ENCODE measurements at regions of chr3 and their contacts with region 1.

Region 1: GRCh38 chr3:126746395-126747177 is 42.5 kb downstream of the CHCHD6 start:
- DNase-seq: no peak
- ATAC-seq: no peak
- H3K4me3 ChIP-seq: no peak overlapping the region
- H3K4me1 ChIP-seq: peaks cover 4% of the 10 kb centered on the region
- CTCF ChIP-seq: no peak

Region 2: GRCh38 chr3:126798521-126798920 is 51.9 kb after region 1 on chr3:
- intact Hi-C with region 1: no loop called
- DNase-seq: no peak
- ATAC-seq: no peak
- H3K4me3 ChIP-seq: no peak overlapping the region
- H3K4me1 ChIP-seq: no peaks in the 10 kb centered on the region
- CTCF ChIP-seq: no peak

Region 3: GRCh38 chr3:126961191-126961790 is 214.7 kb after region 1 on chr3:
- intact Hi-C with region 1: no loop called
- DNase-seq: peak; percentile 48 to 74 (median 62)
- ATAC-seq: peak; percentile 72
- H3K4me3 ChIP-seq: no peak overlapping the region
- H3K4me1 ChIP-seq: no peaks in the 10 kb centered on the region
- CTCF ChIP-seq: no peak

Region 4: GRCh38 chr3:127544192-127544802 is 797.7 kb after region 1 on chr3:
- intact Hi-C with region 1: loop called in 1 of 2 experiments (anchors 10 kb)
- DNase-seq: peak; percentile 70 to 92 (median 84)
- ATAC-seq: peak; percentile 69
- H3K4me3 ChIP-seq: no peak overlapping the region
- H3K4me1 ChIP-seq: peaks cover 21% of the 10 kb centered on the region
- CTCF ChIP-seq: peak; percentile 75

Measured in mucosa of descending colon (tissue), 3 donors.